Activated T-helper 2 cell treated with anti-CD3 and anti-CD28 coated beads, Interferon-gamma antibody, Interleukin-2, Interleukin-4, amounts not matched to agents 10 μg/mL and 5 μg/mL and 100 μg/mL, durations not matched to agents 14 hours and 24 hours and 36 hours (primary cell): ENCODE measurements at regions of chr6 and their contacts with region 1.

Region 1: GRCh38 chr6:2081155-2082138 is 164.0 kb downstream of the GMDS start:
- DNase-seq: peak; percentile 14
- H3K4me3 Mint-ChIP-seq: no peak overlapping the region
- H3K27ac Mint-ChIP-seq: peak overlapping the region; percentile 24
- H3K4me1 Mint-ChIP-seq: peaks cover 37% of the 10 kb centered on the region
- H3K27me3 Mint-ChIP-seq: peaks cover 24% of the 10 kb centered on the region

Region 2: GRCh38 chr6:1970151-1970561 is 111.3 kb before region 1 on chr6:
- intact Hi-C with region 1: no loop called
- DNase-seq: no peak
- H3K4me3 Mint-ChIP-seq: no peak overlapping the region
- H3K27ac Mint-ChIP-seq: no peak overlapping the region
- H3K4me1 Mint-ChIP-seq: peaks cover 7% of the 10 kb centered on the region
- H3K27me3 Mint-ChIP-seq: no peaks in the 10 kb centered on the region

Region 3: GRCh38 chr6:2037237-2037926 is 44.1 kb before region 1 on chr6:
- intact Hi-C with region 1: loop called (anchors 5 kb)
- DNase-seq: no peak
- H3K4me3 Mint-ChIP-seq: no peak overlapping the region
- H3K27ac Mint-ChIP-seq: no peak overlapping the region
- H3K4me1 Mint-ChIP-seq: peaks cover 33% of the 10 kb centered on the region
- H3K27me3 Mint-ChIP-seq: peaks cover 16% of the 10 kb centered on the region